ENCODE measurements at regions of chr2 and their contacts with region 1.

Region 1: GRCh38 chr2:65227425-65228262 is at the start of gene ACTR2:
- DNase-seq: peak; percentile 97
- H3K4me3 Mint-ChIP-seq: peak within 1 kb of the TSS; percentile 100
- H3K27ac Mint-ChIP-seq: peak within 1 kb of the TSS; percentile 99
- H3K4me1 Mint-ChIP-seq: peaks cover 32% of the 10 kb centered on the region
- H3K27me3 Mint-ChIP-seq: no peaks in the 10 kb centered on the region
- total RNA-seq, gene ACTR2: 401 to 406 TPM

Region 2: DNA sequence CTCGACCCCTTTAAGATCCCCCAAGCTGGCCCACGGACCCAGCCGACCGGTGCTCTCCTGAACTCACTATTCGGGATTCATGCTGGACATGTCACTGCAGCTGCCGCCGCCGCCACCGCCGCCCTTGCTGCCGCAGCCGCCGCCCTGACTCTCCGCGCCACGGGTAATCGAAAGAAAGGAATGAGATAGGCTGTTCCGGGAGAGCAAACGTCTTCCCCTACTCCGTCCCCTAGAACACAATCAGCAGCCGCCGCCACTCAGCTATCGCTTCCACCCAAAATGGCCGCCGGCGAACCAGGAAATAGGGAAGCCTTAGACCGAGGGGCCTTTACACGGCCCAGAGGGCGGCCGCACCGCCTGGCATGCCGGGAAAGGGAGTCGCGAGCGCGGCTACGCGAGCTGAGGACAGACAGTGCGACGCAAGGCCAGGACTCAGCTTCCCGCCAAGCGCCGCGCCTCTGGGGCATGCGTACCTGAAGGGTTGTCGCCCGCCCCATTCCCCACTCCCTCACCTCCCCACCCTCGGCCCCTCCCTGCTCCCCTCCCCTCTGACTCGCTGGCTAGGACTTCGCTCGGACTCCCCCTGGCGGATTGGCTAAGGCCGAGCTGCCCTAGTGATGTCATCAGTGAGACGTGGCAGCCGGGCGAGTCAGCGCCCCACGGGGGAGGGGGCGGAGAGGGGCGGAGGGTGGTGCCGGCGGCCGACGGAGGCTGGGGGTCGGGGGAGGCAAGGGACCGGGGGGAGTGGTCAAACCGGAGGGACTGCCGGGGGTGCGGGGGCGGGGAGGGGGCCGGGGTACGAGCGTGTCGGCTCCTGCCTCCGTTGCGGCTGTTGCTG is 97.6 kb before region 1 on chr2 and contains the start of gene RAB1A:
- CTCF ChIA-PET with region 1: interaction called, 7 read pairs
- POLR2A ChIA-PET with region 1: interaction called, 20 read pairs
- intact Hi-C with region 1: loop called (anchors 1 kb)
- DNase-seq: peak; percentile 100
- H3K4me3 Mint-ChIP-seq: peak within 1 kb of the TSS; percentile 96
- H3K27ac Mint-ChIP-seq: peak within 1 kb of the TSS; percentile 95
- H3K4me1 Mint-ChIP-seq: peaks cover 34% of the 10 kb centered on the region
- H3K27me3 Mint-ChIP-seq: no peaks in the 10 kb centered on the region
- total RNA-seq, gene RAB1A: 84.3 to 84.5 TPM

Region 3: DNA sequence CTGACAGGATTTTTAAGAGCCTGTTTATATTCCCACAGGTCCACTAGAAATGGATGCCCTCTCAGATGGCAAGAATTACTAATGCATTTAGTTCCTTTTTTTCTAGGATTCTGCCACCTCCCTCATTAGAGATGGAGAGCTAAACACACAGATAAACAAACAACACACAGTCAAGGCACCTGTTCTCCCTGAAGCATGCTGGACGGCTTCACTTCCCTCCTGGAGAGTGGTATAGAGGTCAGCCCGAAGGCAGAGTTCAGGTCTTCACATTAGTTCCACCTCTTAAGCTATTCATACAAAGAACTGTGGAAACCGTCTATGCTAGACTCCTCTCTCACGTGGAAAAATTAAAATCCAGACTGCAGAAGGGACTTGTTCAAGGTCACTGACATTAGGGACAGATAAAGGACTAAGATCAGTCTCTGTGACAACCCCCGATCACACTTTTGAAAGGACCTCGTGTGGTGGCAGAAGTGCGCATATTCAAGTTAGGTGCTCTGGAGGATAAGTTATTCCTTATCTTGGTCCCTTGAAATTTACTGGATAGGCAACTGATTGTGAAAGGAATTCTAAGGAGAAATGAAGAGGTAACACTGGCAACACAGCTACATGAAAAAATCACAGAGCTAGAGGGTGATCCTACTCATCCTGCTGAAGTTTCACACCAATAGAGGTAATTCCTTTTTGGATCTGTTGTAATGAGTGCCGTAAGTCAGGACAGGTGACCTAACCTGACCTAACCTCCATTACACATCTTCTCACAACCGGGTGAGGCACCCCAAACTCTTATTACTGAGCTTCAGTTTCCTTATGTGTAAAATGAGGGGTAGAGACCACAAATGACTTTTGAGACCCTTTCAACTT is 129.7 kb after region 1 on chr2:
- CTCF ChIA-PET with region 1: no interaction called
- POLR2A ChIA-PET with region 1: interaction called, 4 read pairs
- intact Hi-C with region 1: loop called (anchors 5 kb)
- DNase-seq: peak; percentile 27
- H3K4me3 Mint-ChIP-seq: no peak overlapping the region
- H3K27ac Mint-ChIP-seq: peak overlapping the region; percentile 28
- H3K4me1 Mint-ChIP-seq: peaks cover 34% of the 10 kb centered on the region
- H3K27me3 Mint-ChIP-seq: no peaks in the 10 kb centered on the region

Measured in activated CD4-positive, alpha-beta memory T cell treated with anti-CD3 and anti-CD28 coated beads for 36 hours (primary cell).